AG04450 (cell line): ENCODE measurements at regions of chr10 and their contacts with region 1.

Region 1: DNA sequence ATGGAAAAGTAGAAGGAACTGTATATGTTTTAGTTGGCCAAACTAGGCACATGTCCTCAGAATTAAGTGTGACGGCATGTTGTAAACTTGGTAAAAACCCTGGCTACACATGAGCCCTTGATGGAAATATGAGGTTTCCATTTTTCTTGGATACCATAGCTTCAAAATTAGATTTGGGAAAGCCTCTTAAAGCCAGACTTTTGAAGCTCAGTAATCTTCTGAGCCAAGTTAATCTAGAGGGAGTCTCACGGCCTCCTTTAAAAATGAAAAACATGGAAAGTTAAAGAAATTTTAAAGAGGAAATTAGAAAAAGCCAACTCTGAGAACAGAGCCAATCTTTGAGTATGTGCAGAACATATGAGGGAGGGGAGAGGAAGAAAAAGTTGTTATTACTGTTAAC is 376.0 kb downstream of the CTNNA3 start:
- DNase-seq: no peak
- H3K4me3 ChIP-seq: no peak overlapping the region
- H3K27ac ChIP-seq: no peak overlapping the region
- H3K27me3 ChIP-seq: no peaks in the 10 kb centered on the region
- CTCF ChIP-seq: no peak

Region 2: DNA sequence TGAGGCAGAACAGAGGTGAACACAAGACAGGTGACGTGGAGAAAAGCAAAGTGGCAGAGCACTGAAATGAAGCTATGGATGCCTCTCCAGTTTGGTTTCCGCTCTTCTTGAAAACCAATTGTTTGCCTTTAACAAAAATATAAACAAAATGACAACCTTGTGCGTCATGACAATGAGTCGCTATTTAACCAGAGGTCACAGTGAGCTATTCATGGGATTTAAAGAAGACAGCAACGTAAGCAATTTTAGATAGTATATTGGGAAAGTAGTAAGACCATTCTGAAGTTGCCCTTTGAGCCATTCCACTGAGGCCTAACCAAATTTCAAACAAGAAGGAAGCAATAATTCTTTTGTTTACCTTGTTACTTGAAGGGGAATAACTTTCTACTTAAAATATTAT is 409.3 kb before region 1 on chr10:
- CTCF ChIA-PET with region 1: no interaction called
- POLR2A ChIA-PET with region 1: no interaction called
- DNase-seq: no peak
- H3K4me3 ChIP-seq: no peak overlapping the region
- H3K27ac ChIP-seq: no peak overlapping the region
- H3K27me3 ChIP-seq: no peaks in the 10 kb centered on the region
- CTCF ChIP-seq: no peak

Region 3: GRCh38 chr10:67050415-67050814 is 269.6 kb before region 1 on chr10:
- CTCF ChIA-PET with region 1: no interaction called
- POLR2A ChIA-PET with region 1: no interaction called
- DNase-seq: no peak
- H3K4me3 ChIP-seq: no peak overlapping the region
- H3K27ac ChIP-seq: no peak overlapping the region
- H3K27me3 ChIP-seq: no peaks in the 10 kb centered on the region
- CTCF ChIP-seq: no peak

Region 4: GRCh38 chr10:67306588-67307205 is 13.3 kb before region 1 on chr10:
- CTCF ChIA-PET with region 1: interaction called, 12 read pairs
- POLR2A ChIA-PET with region 1: no interaction called
- DNase-seq: no peak
- H3K4me3 ChIP-seq: no peak overlapping the region
- H3K27ac ChIP-seq: no peak overlapping the region
- H3K27me3 ChIP-seq: no peaks in the 10 kb centered on the region
- CTCF ChIP-seq: peak; percentile 64